Gastrocnemius medialis (tissue), 4 donors: ENCODE measurements at regions of chr12 and their contacts with region 1.

Region 1: DNA sequence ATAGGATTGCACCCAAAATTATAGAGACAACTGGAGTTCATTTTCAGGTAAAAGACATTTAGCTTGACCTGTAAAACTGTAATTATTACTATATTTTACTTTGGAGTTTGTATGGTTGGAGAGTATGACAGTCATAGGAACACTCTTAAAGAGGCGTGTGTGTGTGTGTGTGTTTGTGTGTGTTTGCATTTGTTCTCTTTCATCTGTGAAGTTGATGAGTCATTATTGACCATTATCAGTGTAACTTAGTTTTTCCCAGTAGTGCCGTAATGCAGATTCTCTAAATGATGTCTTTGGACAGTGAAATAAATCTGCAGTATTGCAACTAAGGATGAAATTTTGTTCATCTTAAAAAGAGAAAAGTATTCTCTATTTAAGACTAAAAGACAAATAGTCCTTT is 13.0 kb downstream of the WASHC4 start:
- DNase-seq: no peak
- ATAC-seq: no peak
- H3K4me3 ChIP-seq: no peak overlapping the region
- H3K27ac ChIP-seq: no peak overlapping the region
- H3K4me1 ChIP-seq: no peaks in the 10 kb centered on the region
- H3K27me3 ChIP-seq: no peaks in the 10 kb centered on the region
- CTCF ChIP-seq: no peak
- POLR2A ChIP-seq: no peak

Region 2: GRCh38 chr12:104314242-104314614 is 806.3 kb before region 1 on chr12:
- in situ Hi-C with region 1: no loop called
- intact Hi-C with region 1: loop called (anchors 5 kb)
- DNase-seq: no peak
- ATAC-seq: peak in 1 of 2 donors; percentile 45
- H3K4me3 ChIP-seq: no peak overlapping the region
- H3K27ac ChIP-seq: peak overlapping the region in 1 of 4 donors; percentile 48
- H3K4me1 ChIP-seq: peaks cover 0 to under 1% of the 10 kb centered on the region in 2 donors
- H3K27me3 ChIP-seq: no peaks in the 10 kb centered on the region
- CTCF ChIP-seq: no peak
- POLR2A ChIP-seq: no peak

Region 3: DNA sequence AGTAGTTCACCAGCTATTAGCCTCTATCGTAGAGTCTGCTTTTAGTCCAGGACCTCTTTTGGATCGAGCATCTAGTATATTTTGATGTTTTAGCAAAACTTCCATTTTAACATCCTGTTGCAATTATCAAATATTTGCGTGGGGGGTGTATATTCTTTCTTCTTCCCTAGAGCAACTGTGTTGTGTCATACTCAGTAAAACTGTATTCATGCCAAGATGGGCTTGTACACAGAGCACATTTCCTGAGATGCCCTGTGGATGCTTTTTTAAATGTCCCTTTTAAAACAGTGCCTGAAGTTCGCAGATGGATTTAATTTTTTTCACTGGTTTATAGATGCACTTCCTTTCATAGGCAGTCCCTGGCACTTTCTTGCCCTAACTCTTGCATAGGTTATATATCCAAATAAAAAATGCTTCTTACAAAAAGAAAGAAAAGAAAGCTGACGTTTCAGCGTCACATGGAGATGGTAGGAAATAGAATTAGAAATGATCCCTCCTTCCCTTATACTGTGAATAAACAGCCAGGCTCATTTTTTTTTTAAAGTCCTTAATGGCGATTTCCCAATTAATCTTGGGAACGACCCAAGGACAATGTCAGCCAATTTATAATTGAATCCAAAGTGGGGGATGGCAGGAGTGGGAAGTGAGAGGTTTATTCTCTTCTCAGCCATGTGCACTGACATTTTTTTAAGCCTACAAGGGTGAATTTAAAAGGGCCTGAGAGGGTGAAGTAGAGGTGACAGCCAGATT is 409.4 kb before region 1 on chr12:
- in situ Hi-C with region 1: no loop called
- intact Hi-C with region 1: no loop called
- DNase-seq: no peak
- ATAC-seq: peak; percentile 30 to 58
- H3K4me3 ChIP-seq: no peak overlapping the region
- H3K27ac ChIP-seq: peak overlapping the region in 1 of 4 donors; percentile 10
- H3K4me1 ChIP-seq: no peaks in the 10 kb centered on the region
- H3K27me3 ChIP-seq: no peaks in the 10 kb centered on the region
- CTCF ChIP-seq: no peak
- POLR2A ChIP-seq: no peak

Region 4: DNA sequence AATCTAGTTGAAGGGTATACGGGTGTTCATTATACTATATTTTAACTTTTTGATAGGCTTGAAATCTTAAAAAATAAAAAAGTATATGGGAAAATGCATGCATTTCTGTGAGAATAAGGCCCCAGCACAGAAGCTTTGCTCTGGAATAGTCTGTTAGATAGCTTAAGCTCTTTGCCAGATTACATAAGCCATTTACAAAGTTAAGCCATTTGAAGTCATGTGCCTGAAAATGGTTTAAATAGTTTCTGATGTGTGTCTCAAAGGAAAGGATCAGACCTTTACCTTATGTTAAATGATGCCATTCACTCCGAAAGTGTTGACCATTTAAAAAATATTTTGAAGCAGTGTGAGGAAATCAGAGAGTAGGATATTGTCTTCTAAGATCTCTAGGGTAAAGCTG is 38.3 kb after region 1 on chr12:
- in situ Hi-C with region 1: no loop called
- intact Hi-C with region 1: loop called (anchors 5 kb)
- DNase-seq: no peak
- ATAC-seq: no peak
- H3K4me3 ChIP-seq: no peak overlapping the region
- H3K27ac ChIP-seq: no peak overlapping the region
- H3K4me1 ChIP-seq: no peaks in the 10 kb centered on the region
- H3K27me3 ChIP-seq: no peaks in the 10 kb centered on the region
- CTCF ChIP-seq: no peak
- POLR2A ChIP-seq: no peak